Thyroid gland (tissue), 4 donors: ENCODE measurements at regions of chr5 and their contacts with region 1.

Region 1: DNA sequence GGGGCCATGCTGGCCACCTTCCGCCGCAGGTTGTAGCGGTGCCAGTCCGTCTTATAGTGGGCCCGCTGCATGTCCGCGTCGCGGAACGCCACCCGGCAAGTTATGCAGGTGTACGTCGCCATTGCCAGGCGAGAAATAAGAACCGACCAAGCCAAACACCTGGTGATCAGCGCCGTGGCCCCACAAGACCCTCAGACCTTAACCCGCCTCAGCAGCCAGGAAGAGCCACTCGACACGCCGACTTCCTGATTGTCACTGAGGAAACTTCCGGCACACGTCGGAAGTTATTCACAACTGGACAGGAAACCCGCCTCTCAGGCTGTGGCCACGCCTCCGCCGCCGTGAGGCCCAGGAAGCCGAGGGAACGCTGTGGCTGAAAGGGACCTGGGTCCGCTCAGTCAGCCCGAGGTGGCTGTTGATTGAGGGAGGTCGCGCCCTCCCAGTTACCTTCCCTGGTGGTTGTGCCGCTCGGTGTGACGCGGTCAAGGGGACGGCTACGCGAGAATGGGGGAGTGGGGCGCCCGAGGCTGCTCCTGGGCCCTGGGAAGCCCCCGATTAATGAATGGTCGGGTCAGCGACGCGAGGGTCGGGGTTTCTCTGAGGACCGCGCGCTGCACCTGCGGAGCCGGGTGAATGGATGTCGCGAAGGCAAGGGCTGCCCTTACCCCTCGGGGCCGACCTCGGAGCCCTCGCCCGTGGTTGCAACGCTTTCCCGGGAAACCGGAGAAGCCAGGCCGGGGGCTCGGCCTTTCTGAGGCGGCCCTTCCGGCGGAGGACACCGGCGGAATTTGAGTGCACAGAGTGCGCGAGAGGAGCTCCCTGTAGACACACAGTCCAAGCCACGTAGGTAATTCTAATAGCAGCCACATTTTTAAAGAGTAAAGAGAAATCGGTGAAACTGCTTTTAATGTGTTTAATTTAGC is at the start of gene ZNF622:
- DNase-seq: peak; percentile 93
- H3K4me3 ChIP-seq: peak within 1 kb of the TSS; percentile 81 to 93 (median 88)
- H3K27ac ChIP-seq: peak within 1 kb of the TSS in 2 of 3 donors; percentile 59 to 80
- H3K4me1 ChIP-seq: peaks cover 23 to 37% of the 10 kb centered on the region in 2 donors
- H3K27me3 ChIP-seq: no peaks in the 10 kb centered on the region
- CTCF ChIP-seq: no peak
- POLR2A ChIP-seq: peak in 1 of 2 donors; percentile 91
- total RNA-seq, gene ZNF622: 24.3 to 30.9 (median 28.1) TPM

Region 2: GRCh38 chr5:16234598-16234997 is 231.2 kb before region 1 on chr5:
- intact Hi-C with region 1: no loop called
- DNase-seq: no peak
- H3K4me3 ChIP-seq: no peak overlapping the region
- H3K27ac ChIP-seq: no peak overlapping the region
- H3K4me1 ChIP-seq: no peaks in the 10 kb centered on the region
- H3K27me3 ChIP-seq: no peaks in the 10 kb centered on the region
- CTCF ChIP-seq: no peak
- POLR2A ChIP-seq: no peak

Region 3: DNA sequence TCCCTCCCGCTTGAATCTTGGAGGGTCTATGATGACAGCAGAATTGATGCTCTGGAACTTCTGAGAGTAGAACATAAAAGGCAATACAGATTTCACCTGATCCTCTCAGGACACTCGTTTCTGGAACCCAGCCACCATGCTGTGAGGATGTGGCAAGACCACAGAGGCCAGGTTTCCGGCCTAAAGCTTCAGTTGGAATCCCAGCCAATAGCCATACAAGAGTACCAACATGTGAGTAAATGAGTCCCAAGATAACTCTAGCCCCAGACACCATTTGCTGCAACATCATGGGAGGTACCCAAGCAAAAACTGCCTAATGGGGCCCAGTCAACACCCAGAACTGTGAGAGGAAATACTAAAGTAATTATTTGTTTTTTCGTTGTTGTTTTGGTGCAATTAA is 220.6 kb before region 1 on chr5:
- intact Hi-C with region 1: no loop called
- DNase-seq: no peak
- H3K4me3 ChIP-seq: no peak overlapping the region
- H3K27ac ChIP-seq: no peak overlapping the region
- H3K4me1 ChIP-seq: no peaks in the 10 kb centered on the region
- H3K27me3 ChIP-seq: no peaks in the 10 kb centered on the region
- CTCF ChIP-seq: no peak
- POLR2A ChIP-seq: no peak

Region 4: GRCh38 chr5:17204133-17204489 is 738.3 kb after region 1 on chr5:
- intact Hi-C with region 1: loop called (anchors 10 kb)
- DNase-seq: no peak
- H3K4me3 ChIP-seq: no peak overlapping the region
- H3K27ac ChIP-seq: no peak overlapping the region
- H3K4me1 ChIP-seq: no peaks in the 10 kb centered on the region
- H3K27me3 ChIP-seq: no peaks in the 10 kb centered on the region
- CTCF ChIP-seq: no peak
- POLR2A ChIP-seq: no peak